ENCODE measurements at regions of chr9 and their contacts with region 1.

Region 1: GRCh38 chr9:297104-297972 is 82.7 kb downstream of the DOCK8 start:
- DNase-seq: peak in 3 of 9 experiments; percentile 13 to 50 (median 26)
- ATAC-seq: peak; percentile 48
- H3K4me3 ChIP-seq: no peak overlapping the region
- H3K4me3 Mint-ChIP-seq: no peak overlapping the region
- H3K27ac ChIP-seq: peak overlapping the region in 1 of 2 experiments; percentile 21
- H3K27ac Mint-ChIP-seq: peak overlapping the region; percentile 62
- H3K4me1 ChIP-seq: peaks cover 15% of the 10 kb centered on the region
- H3K4me1 Mint-ChIP-seq: peaks cover 60% of the 10 kb centered on the region
- H3K27me3 ChIP-seq: no peaks in the 10 kb centered on the region
- H3K27me3 Mint-ChIP-seq: no peaks in the 10 kb centered on the region
- CTCF ChIP-seq: no peak

Region 2: DNA sequence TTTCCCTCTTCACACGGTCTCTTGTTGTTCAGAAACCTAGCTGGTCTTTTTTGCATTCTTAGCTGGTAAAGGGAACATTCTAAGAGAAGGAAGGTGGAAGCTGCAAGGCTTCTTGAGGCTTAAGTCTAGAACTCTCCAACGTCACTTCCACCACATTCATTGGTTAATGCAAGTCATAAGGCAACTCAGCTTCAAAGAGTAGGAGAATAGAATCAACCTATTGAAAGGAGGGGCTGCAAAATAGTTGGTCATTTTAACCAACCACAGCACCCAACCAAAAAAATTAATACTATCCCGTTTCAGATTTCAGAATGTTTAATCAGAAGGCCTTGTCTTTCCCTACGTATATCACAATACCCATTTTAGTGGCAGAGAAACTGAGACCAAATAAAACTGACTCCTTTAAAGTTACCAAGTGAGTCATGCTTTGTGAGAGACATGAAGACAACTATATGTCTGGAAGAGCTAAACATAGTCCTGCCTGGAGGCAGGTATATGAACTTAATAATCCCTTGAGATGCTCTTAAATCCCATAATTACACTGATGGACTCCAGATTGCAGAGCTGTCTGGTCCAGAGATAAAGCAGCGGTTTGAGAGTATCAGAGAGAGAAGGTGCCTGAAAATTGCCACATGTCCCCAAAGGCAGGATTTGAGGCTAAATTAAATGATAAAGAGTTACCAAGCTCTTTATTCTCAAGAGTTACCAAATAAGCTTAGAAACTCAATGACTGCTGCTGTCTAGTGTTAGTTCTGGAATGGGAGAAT is 68.2 kb before region 1 on chr9:
- CTCF ChIA-PET with region 1: no interaction called
- POLR2A ChIA-PET with region 1: no interaction called
- intact Hi-C with region 1: no loop called
- DNase-seq: no peak
- ATAC-seq: no peak
- H3K4me3 ChIP-seq: no peak overlapping the region
- H3K4me3 Mint-ChIP-seq: no peak overlapping the region
- H3K27ac ChIP-seq: no peak overlapping the region
- H3K27ac Mint-ChIP-seq: no peak overlapping the region
- H3K4me1 ChIP-seq: no peaks in the 10 kb centered on the region
- H3K4me1 Mint-ChIP-seq: no peaks in the 10 kb centered on the region
- H3K27me3 ChIP-seq: no peaks in the 10 kb centered on the region
- H3K27me3 Mint-ChIP-seq: no peaks in the 10 kb centered on the region
- CTCF ChIP-seq: no peak

Region 3: DNA sequence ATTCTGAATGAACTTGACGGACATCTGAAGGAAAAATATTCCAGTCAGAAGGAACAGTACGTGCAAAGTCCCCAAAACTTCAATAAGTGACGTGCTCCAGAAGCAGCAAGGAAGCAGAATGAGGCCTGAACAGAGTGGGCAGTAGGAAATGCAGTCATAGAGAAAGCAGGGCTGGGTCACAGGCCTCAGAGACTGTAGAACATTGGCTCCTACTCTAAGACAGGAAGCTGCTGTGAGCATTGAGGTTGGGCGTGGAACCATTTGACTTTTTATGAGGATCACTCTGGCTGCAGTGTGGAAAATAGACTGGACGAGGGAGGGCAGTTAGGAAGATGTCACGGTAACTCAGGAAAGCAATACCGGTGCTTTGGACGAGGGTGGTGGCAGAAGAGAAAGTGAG is 18.7 kb before region 1 on chr9:
- CTCF ChIA-PET with region 1: no interaction called
- POLR2A ChIA-PET with region 1: interaction called, 4 read pairs
- intact Hi-C with region 1: loop called in 1 of 2 experiments (anchors 2 kb)
- DNase-seq: peak in 6 of 9 experiments; percentile 28 to 79 (median 50)
- ATAC-seq: peak; percentile 48
- H3K4me3 ChIP-seq: peak overlapping the region in 1 of 2 experiments; percentile 10
- H3K4me3 Mint-ChIP-seq: no peak overlapping the region
- H3K27ac ChIP-seq: peak overlapping the region; percentile 78 to 94
- H3K27ac Mint-ChIP-seq: no peak overlapping the region
- H3K4me1 ChIP-seq: peaks cover 75% of the 10 kb centered on the region
- H3K4me1 Mint-ChIP-seq: peaks cover 49% of the 10 kb centered on the region
- H3K27me3 ChIP-seq: no peaks in the 10 kb centered on the region
- H3K27me3 Mint-ChIP-seq: no peaks in the 10 kb centered on the region
- CTCF ChIP-seq: no peak

Region 4: GRCh38 chr9:312596-313320 is 15.4 kb after region 1 on chr9:
- CTCF ChIA-PET with region 1: no interaction called
- POLR2A ChIA-PET with region 1: interaction called, 5 read pairs
- intact Hi-C with region 1: loop called in 1 of 2 experiments (anchors 2 kb)
- DNase-seq: no peak
- ATAC-seq: no peak
- H3K4me3 ChIP-seq: no peak overlapping the region
- H3K4me3 Mint-ChIP-seq: no peak overlapping the region
- H3K27ac ChIP-seq: no peak overlapping the region
- H3K27ac Mint-ChIP-seq: no peak overlapping the region
- H3K4me1 ChIP-seq: no peaks in the 10 kb centered on the region
- H3K4me1 Mint-ChIP-seq: peaks cover 2% of the 10 kb centered on the region
- H3K27me3 ChIP-seq: no peaks in the 10 kb centered on the region
- H3K27me3 Mint-ChIP-seq: no peaks in the 10 kb centered on the region
- CTCF ChIP-seq: no peak

Measured in CD8-positive, alpha-beta T cell (primary cell).